Pancreas (tissue), 10 donors: ENCODE measurements at regions of chr3 and their contacts with region 1.

Region 1: DNA sequence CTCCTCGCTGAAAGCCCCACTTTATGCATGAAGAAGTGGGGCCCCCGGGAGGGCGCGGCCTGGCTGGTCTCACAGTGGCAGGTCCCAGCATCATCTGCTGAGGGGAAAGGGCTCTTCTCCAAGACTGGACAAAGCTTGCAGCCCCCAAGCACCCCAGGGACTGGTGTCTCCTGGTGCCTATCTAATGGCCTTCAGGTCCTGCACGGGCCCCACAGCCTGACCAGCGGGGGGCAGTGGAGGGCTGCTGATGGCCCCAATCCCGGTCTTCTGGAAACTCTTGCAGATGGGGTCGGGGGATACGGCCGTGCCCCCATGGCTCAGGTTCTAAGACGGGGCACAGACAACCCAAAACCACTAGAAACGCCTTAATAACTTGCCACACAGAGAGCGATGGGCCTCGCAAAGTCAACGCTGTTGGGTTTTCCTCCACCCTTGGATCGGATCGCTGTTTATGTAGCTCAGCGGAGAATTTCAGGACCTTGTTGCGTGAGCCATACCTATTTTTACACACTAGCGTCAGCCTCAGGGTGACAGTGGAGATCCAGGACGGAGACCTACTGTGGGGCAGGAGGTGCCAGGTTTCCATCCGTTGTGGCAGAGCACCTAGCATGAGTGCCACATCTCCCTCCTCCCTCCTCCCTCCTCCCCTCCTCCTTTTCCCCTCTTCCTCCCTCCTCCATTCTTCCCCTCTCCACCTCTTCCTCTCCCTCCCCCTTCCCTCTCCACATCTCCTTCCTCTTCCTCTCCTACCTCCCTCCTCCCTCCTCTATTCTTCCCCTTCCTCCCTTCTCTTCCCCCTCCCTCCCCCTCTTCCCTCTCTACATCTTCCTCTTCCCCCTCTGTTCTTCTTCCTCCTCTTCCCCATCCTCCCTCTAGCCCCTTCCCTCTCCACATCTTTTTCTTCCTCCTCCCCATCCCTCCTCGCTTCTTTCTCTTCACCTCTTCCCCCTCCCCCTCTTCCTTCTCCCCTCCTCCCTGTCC is 79.3 kb upstream of the ALDH1L1 start:
- DNase-seq: peak; percentile 53 to 87 (median 77)
- ATAC-seq: peak; percentile 86 to 97 (median 93)
- H3K4me3 ChIP-seq: peak overlapping the region in 2 of 4 donors; percentile 21 to 26
- H3K27ac ChIP-seq: no peak overlapping the region
- H3K4me1 ChIP-seq: no peaks in the 10 kb centered on the region
- H3K27me3 ChIP-seq: no peaks in the 10 kb centered on the region
- CTCF ChIP-seq: peak; percentile 50 to 76 (median 70)

Region 2: DNA sequence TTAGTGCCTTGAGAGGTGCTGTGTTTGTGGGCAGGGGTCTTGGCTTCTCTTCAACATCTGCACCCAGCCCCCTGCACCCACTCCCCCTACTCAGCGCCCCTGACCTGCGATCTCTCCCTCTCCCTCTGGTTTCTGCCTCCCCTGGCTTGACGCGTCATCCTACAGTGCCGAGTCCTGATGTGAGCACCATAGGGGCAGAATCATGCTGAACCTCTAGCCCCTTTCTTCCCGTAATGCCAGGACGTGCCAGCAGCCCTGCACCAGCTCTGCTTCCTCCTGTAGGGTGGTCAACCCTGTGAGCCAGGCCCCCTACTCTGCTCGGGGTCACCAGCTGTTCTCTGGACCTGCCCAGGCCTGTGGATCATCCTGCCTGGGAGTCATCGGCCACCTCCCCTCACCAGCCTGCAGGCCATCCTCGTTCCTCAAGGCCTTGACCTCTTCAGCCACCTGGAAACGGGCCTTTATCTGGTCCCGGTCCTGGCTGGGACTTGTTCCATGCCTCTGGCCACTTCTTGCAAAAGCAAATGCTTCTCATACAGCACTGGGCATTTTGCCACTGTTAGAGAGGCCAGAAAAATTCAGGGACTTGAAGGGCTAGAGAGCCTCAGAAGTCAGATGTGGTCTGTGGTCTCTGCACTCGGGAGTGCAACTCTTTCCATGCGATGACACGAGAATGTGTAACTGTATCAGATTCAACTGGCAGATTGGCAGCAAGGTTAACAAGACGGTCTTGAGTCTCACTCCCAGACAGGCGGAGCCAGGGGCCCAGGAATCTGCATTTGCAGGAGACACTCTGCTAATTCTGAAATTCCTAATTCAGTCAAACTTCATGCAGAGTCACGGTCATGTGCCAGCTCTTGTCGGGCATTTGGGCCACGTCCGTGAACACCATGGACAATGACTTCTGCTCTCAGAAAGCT is 114.2 kb after region 1 on chr3:
- intact Hi-C with region 1: loop called in 1 of 3 experiments (anchors 5 kb)
- DNase-seq: peak in 2 of 6 donors; percentile 30 to 46
- ATAC-seq: peak in 1 of 4 donors; percentile 9
- H3K4me3 ChIP-seq: no peak overlapping the region
- H3K27ac ChIP-seq: no peak overlapping the region
- H3K4me1 ChIP-seq: no peaks in the 10 kb centered on the region
- H3K27me3 ChIP-seq: no peaks in the 10 kb centered on the region
- CTCF ChIP-seq: no peak

Region 3: DNA sequence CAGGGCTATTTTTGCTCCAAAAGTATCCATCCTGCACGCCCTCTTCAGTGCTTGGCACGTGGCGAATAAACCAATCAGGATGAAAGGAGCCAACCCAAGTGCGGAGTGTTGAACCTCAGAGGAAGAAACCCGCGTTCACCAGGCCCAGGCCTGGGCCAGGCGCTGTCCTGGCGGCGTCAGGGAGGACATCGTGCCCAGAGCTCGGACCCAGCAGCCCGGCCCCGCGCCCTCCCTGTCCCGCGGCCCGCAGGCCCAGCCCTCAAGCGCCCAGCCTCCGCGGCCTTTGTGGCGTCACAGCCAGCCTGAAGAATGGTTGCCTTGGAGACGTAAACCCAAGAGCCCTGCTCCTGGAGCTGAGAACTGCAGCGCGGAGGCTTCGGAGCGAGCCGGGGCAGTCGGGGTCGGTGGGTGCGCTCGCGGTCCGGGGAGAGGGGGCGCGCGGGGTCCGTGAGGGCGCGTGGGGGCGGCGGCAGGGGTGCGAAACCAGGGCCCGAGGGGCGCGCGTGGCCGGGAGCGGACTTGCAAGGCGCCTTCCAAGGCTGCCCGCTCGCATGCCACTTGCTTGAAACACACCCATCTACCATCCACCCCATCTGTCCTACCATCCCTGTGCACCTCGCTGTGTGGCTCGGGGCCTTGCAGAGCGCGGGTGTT is 135.0 kb after region 1 on chr3 and contains the start of gene CFAP100:
- intact Hi-C with region 1: loop called in 2 of 3 experiments (anchors 5 kb)
- DNase-seq: peak in 2 of 6 donors; percentile 49 to 65
- ATAC-seq: peak; percentile 46 to 79 (median 62)
- H3K4me3 ChIP-seq: peak within 1 kb of the TSS in 1 of 4 donors; percentile 22
- H3K27ac ChIP-seq: no peak within 1 kb of the TSS
- H3K4me1 ChIP-seq: no peaks in the 10 kb centered on the region
- H3K27me3 ChIP-seq: no peaks in the 10 kb centered on the region
- CTCF ChIP-seq: no peak
- total RNA-seq, gene CFAP100: not detected